ENCODE measurements at regions of chr10 and their contacts with region 1.

Region 1: DNA sequence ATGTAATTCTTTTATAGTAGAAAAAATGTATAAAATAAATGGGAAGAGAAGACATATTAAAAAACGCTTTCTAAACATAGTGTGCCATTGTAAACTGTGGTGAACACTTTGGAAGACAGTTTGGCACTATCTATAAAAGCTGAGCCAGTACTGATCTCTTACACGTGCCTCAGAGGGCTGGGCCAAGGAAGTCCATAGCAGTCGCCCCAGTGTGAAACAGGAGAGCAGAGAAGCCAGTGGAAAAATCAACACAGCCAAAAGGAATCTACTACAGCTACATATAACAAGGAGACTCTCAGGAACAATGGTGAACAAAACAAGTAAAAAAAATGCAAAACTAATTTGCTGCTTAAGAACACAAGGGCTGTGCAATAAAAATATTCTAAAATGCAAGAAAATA is 20.6 kb downstream of the SEPHS1 start:
- DNase-seq: peak in 1 of 2 donors; percentile 42
- ATAC-seq: peak; percentile 47 to 93 (median 89)
- H3K4me3 ChIP-seq: no peak overlapping the region
- H3K27ac ChIP-seq: peak overlapping the region in 2 of 10 donors; percentile 29 to 37
- H3K4me1 ChIP-seq: peaks cover 0 to 11% (median 0%) of the 10 kb centered on the region in 9 donors
- H3K27me3 ChIP-seq: no peaks in the 10 kb centered on the region
- CTCF ChIP-seq: no peak

Region 2: GRCh38 chr10:12949248-12949647 is 378.3 kb before region 1 on chr10:
- intact Hi-C with region 1: no loop called
- DNase-seq: no peak
- ATAC-seq: no peak
- H3K4me3 ChIP-seq: no peak overlapping the region
- H3K27ac ChIP-seq: no peak overlapping the region
- H3K4me1 ChIP-seq: peaks cover 0 to 4% (median 0%) of the 10 kb centered on the region in 9 donors
- H3K27me3 ChIP-seq: no peaks in the 10 kb centered on the region
- CTCF ChIP-seq: no peak

Region 3: GRCh38 chr10:13338390-13339110 is 11.0 kb after region 1 on chr10:
- intact Hi-C with region 1: loop called in 1 of 10 experiments (anchors 1 kb)
- DNase-seq: no peak
- ATAC-seq: peak in 7 of 8 donors; percentile 35 to 76 (median 53)
- H3K4me3 ChIP-seq: no peak overlapping the region
- H3K27ac ChIP-seq: peak overlapping the region in 7 of 10 donors; percentile 8 to 71 (median 57)
- H3K4me1 ChIP-seq: peaks cover 5 to 44% (median 33%) of the 10 kb centered on the region in 9 donors
- H3K27me3 ChIP-seq: no peaks in the 10 kb centered on the region
- CTCF ChIP-seq: no peak

Measured in heart right ventricle (tissue), 16 donors.